OCI-LY7 (cell line): ENCODE measurements at regions of chr3 and their contacts with region 1.

Region 1: GRCh38 chr3:149129326-149130205 is at the start of gene HPS3:
- DNase-seq: peak; percentile 95
- H3K4me3 ChIP-seq: peak within 1 kb of the TSS; percentile 86
- H3K27ac ChIP-seq: peak within 1 kb of the TSS; percentile 48
- H3K4me1 ChIP-seq: peaks cover 35% of the 10 kb centered on the region
- CTCF ChIP-seq: no peak
- total RNA-seq, gene HPS3: 18.5 and 26.2 TPM in 2 replicates

Region 2: DNA sequence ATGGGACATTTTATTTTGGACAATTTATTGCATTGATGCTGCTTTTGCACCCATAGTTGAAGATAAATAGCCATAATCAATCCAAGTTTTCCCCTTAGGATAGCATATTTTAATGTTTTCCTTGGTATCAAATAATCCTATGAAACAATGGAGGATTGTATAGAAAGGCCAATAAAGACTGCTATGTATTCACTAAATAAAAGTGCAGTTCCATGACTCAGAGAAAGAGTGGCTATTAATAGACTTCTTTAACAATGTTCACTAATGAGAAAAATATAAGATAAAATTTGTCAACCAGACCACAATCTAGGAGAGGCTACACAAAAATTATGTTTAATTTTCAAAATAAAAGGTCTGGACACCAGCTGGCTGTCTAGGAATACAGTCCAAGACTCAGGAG is 992.8 kb before region 1 on chr3:
- CTCF ChIA-PET with region 1: no interaction called
- POLR2A ChIA-PET with region 1: no interaction called
- intact Hi-C with region 1: no loop called
- DNase-seq: no peak
- H3K4me3 ChIP-seq: no peak overlapping the region
- H3K27ac ChIP-seq: no peak overlapping the region
- H3K4me1 ChIP-seq: no peaks in the 10 kb centered on the region
- CTCF ChIP-seq: no peak

Region 3: DNA sequence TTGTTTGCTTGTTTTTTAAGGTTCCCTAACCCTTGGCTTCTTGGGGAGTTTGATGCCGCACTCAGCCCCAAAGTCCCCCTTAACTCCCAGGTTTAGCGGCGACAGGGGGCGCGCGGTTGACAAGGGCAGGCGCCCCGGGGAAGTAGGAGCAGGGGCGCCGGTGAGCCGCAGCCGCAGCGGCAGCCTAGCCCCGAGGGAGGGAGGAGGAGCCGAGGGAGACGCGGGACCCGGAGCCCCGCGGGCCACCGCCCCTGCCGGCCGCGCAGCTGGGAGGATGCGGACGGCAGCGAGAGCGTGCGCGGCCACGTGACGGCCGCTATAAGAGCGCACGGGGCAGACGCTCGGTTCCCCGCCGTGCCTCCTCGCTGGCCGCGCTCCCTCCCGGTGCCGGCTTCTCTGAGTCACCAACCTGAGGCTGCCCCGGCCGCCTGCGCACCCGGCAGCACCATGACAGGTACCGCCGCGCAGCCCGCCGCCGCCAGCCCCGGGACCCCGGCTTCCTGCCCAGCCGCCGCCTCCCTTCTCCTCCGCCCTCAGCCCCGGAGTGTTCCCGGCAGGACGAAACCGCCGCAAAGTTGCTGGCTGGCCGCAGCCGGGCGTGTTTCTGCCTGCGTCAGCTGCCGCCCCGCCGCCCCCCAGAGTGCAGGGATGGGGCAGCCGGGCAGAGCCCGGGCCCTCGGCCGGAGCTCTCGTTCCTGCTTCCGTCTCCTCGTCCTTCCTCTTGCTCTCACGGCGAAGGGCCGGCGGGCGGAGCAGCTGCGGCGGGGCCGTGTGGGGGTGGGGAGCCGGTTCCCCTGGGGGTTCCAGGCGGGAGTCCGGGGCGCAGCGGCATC is 138.2 kb before region 1 on chr3 and contains the start of gene GYG1:
- CTCF ChIA-PET with region 1: interaction called, 3 read pairs
- POLR2A ChIA-PET with region 1: interaction called, 4 read pairs
- intact Hi-C with region 1: loop called (anchors 5 kb)
- DNase-seq: peak; percentile 88
- H3K4me3 ChIP-seq: peak within 1 kb of the TSS; percentile 81
- H3K27ac ChIP-seq: peak within 1 kb of the TSS; percentile 50
- H3K4me1 ChIP-seq: peaks cover 20% of the 10 kb centered on the region
- CTCF ChIP-seq: peak; percentile 80
- total RNA-seq, gene GYG1: 9.6 and 11.5 TPM in 2 replicates

Region 4: DNA sequence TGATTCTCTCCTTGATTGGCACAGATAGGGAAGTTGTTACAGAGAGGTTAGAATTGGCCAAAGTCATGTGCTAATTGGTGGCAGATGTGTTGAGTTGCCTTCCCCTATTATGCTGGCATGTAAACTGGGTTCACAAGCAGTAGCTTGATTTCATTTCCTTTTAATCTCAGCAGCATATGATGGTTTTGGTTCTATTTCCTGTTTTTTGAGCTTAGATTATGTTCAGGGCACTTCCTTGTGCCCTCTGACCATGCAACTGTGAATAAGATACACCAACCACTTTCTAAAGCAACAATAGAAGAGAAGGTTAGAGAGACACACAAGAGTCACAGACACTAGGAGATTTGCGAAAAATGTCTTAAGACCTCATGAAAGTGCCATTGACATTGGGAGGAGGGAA is 16.4 kb after region 1 on chr3:
- CTCF ChIA-PET with region 1: interaction called, 3 read pairs
- POLR2A ChIA-PET with region 1: interaction called, 55 read pairs
- intact Hi-C with region 1: loop called (anchors 1 kb)
- DNase-seq: peak; percentile 89
- H3K4me3 ChIP-seq: peak overlapping the region; percentile 40
- H3K27ac ChIP-seq: peak overlapping the region; percentile 91
- H3K4me1 ChIP-seq: peaks cover 36% of the 10 kb centered on the region
- CTCF ChIP-seq: no peak

Region 5: GRCh38 chr3:149273096-149273751 is 143.7 kb after region 1 on chr3:
- CTCF ChIA-PET with region 1: interaction called, 3 read pairs
- POLR2A ChIA-PET with region 1: interaction called, 8 read pairs
- intact Hi-C with region 1: loop called (anchors 2 kb)
- DNase-seq: peak; percentile 86
- H3K4me3 ChIP-seq: no peak overlapping the region
- H3K27ac ChIP-seq: no peak overlapping the region
- H3K4me1 ChIP-seq: peaks cover 17% of the 10 kb centered on the region
- CTCF ChIP-seq: peak; percentile 100

Region 6: DNA sequence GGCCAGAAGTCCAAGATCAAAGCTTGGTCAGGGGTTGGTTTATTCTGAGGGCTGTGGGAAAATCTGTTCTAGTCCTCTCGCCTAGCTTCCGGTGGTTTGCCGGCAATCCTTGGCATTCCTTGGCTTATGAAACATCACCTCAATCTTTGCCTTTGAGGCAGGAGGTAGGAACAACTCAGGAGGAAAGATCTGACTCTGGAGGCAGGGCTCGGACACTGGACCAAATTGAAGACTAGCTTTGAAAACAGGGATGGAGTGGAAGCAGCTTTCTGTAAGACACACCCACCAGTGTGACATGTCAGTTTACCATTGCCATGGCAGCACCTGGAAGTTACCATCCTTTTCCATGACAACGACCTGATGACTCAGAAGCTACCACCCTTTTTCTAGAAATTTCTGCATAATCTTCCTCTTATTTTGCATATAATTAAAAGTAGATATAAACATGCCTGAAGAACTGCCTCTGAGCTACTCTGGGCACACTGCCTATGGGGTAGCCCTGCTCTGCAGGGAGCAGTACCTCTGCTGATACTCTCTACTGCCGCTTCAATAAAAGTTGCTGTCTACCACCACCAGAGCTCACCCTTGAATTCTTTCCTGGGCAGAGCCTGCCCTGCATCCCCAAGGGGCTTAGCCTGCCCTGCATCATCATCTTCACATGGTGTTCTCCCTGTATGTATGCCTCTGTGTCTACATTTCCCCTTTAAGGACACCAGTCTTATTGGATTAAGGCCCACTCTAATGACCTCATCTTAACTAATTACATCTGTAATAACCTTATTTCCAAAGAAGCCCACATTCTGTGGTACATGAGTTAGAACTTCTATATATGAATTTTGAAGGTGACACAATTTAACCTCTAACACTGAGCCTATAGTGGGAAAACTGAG is 306.7 kb after region 1 on chr3:
- CTCF ChIA-PET with region 1: no interaction called
- POLR2A ChIA-PET with region 1: no interaction called
- intact Hi-C with region 1: no loop called
- DNase-seq: no peak
- H3K4me3 ChIP-seq: no peak overlapping the region
- H3K27ac ChIP-seq: no peak overlapping the region
- H3K4me1 ChIP-seq: no peaks in the 10 kb centered on the region
- CTCF ChIP-seq: no peak

Region 7: DNA sequence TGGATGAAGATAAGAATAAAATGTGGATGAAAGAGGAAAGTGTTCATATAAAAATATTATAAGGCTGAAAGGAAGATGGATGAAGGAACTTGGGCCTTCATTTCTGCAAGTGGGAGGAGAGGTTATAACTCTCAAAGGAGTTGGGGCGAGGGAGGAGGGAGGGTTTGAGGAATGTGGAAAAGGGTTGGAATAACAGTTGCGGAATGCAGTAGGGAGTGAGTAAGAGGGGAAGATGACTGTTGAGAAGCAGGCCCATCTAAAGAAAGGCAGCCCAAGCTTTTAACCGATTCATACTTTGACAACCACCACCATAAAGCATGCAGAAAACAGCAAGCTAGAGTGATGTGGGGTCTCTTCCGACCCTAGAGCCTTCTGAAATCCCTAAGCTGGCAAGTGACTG is 336.6 kb after region 1 on chr3:
- CTCF ChIA-PET with region 1: no interaction called
- POLR2A ChIA-PET with region 1: no interaction called
- intact Hi-C with region 1: no loop called
- DNase-seq: no peak
- H3K4me3 ChIP-seq: no peak overlapping the region
- H3K27ac ChIP-seq: no peak overlapping the region
- H3K4me1 ChIP-seq: no peaks in the 10 kb centered on the region
- CTCF ChIP-seq: no peak

Region 8: GRCh38 chr3:149480325-149481017 is 350.9 kb after region 1 on chr3:
- CTCF ChIA-PET with region 1: no interaction called
- POLR2A ChIA-PET with region 1: no interaction called
- intact Hi-C with region 1: loop called (anchors 10 kb)
- DNase-seq: peak; percentile 38
- H3K4me3 ChIP-seq: no peak overlapping the region
- H3K27ac ChIP-seq: no peak overlapping the region
- H3K4me1 ChIP-seq: no peaks in the 10 kb centered on the region
- CTCF ChIP-seq: peak; percentile 83

Region 9: DNA sequence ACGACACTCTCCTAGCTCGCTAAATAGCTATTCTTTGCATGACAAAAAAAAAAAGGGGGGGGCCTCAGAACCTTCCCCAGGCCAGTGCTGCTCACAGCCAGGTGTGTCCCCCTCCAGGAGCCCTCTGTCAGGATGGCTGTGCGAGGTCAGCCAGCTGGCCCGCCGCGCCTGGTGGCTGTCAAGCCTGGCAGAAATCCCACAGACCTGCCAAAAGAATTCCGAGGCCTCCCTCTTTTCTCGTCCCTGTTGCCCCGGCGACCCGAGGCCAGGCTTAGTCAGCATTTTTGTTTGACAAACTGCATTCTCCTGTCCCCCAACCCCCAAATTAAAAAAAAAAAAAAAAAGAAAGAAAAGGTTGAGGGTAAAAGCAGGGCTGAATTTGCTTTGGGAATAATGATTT is 406.9 kb after region 1 on chr3:
- CTCF ChIA-PET with region 1: no interaction called
- POLR2A ChIA-PET with region 1: no interaction called
- intact Hi-C with region 1: no loop called
- DNase-seq: no peak
- H3K4me3 ChIP-seq: no peak overlapping the region
- H3K27ac ChIP-seq: no peak overlapping the region
- H3K4me1 ChIP-seq: no peaks in the 10 kb centered on the region
- CTCF ChIP-seq: no peak

Region 10: DNA sequence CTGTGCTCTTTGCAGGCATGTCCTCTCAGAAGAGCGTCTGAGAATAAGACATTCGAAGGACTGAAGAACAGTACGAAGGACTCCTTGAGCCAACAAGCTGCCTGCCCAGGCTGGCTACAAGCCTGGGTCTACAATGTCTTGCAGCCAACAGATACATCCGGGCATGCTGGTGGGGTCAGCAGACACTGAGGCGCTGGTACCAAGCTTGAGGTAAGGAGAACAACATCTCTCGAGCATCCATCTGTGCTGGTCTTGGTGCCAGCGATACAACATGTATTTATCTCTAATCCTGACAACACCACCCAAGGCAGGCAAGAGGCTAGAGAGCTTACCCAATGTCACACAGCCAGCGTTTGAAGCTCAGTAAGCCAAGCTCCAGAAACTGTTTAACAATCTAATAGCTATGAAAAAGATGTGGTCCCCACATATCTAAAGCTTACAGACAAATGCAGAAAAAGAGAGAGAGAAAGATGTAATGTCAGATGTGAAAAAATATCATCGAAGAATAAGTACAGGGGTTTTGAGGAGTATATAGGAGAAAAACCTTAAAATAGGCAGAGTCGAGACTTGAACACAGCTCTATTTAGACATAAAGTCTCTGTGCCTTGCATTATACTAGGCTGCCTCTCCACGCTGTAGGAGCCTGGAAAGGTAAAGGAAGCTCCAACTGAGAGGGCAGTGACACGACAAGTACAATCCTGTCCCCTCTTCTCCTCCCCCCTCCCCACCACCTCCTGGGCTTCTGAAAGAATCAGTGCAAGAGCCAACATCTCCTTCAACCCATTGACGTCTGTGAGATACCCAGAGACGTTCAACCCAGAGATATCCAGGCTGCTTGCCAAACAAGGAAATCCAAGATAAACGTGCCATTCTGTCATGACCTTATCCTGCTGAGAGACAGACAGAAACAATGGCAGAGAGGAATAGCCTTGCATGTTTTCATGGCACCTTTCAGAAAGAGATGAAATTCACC is 488.9 kb after region 1 on chr3:
- CTCF ChIA-PET with region 1: no interaction called
- POLR2A ChIA-PET with region 1: no interaction called
- intact Hi-C with region 1: loop called (anchors 10 kb)
- DNase-seq: no peak
- H3K4me3 ChIP-seq: no peak overlapping the region
- H3K27ac ChIP-seq: no peak overlapping the region
- H3K4me1 ChIP-seq: no peaks in the 10 kb centered on the region
- CTCF ChIP-seq: no peak